Activated CD8-positive, alpha-beta memory T cell treated with anti-CD3 and anti-CD28 coated beads, Interleukin-2, amount 10 ng/mL, durations not matched to agents 7 days and 5 days (primary cell): ENCODE measurements at regions of chr5 and their contacts with region 1.

Region 1: DNA sequence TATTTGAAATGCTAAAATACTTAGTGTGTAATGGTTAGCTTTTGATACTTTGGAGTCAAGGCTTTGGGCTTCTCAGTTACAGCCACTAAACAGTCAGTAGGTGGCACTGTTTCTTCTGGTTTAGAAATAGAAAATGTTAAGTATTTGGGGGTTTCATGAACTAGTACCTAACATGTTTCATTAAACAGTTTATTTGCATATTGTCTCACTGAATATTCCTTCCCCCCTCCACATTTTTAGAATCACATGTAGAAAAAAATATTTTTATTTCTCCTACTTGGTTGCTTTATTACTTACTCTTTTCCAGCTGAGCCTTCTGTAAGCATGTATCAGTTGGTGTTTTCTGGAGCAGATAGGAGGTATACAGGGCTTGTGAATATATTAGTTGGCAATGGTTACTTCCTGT is 48.0 kb downstream of the IPO11 start:
- DNase-seq: no peak
- ATAC-seq: peak; percentile 55
- H3K4me3 Mint-ChIP-seq: no peak overlapping the region
- H3K27ac Mint-ChIP-seq: no peak overlapping the region
- H3K4me1 Mint-ChIP-seq: no peaks in the 10 kb centered on the region
- H3K27me3 Mint-ChIP-seq: no peaks in the 10 kb centered on the region

Region 2: GRCh38 chr5:62450259-62450658 is 10.3 kb before region 1 on chr5:
- CTCF ChIA-PET with region 1: interaction called, 12 read pairs
- DNase-seq: no peak
- ATAC-seq: peak; percentile 36
- H3K4me3 Mint-ChIP-seq: no peak overlapping the region
- H3K27ac Mint-ChIP-seq: no peak overlapping the region
- H3K4me1 Mint-ChIP-seq: peaks cover 4% of the 10 kb centered on the region
- H3K27me3 Mint-ChIP-seq: no peaks in the 10 kb centered on the region

Region 3: GRCh38 chr5:62489471-62489870 is 28.9 kb after region 1 on chr5:
- CTCF ChIA-PET with region 1: no interaction called
- DNase-seq: no peak
- ATAC-seq: no peak
- H3K4me3 Mint-ChIP-seq: no peak overlapping the region
- H3K27ac Mint-ChIP-seq: no peak overlapping the region
- H3K4me1 Mint-ChIP-seq: peaks cover 3% of the 10 kb centered on the region
- H3K27me3 Mint-ChIP-seq: no peaks in the 10 kb centered on the region

Region 4: DNA sequence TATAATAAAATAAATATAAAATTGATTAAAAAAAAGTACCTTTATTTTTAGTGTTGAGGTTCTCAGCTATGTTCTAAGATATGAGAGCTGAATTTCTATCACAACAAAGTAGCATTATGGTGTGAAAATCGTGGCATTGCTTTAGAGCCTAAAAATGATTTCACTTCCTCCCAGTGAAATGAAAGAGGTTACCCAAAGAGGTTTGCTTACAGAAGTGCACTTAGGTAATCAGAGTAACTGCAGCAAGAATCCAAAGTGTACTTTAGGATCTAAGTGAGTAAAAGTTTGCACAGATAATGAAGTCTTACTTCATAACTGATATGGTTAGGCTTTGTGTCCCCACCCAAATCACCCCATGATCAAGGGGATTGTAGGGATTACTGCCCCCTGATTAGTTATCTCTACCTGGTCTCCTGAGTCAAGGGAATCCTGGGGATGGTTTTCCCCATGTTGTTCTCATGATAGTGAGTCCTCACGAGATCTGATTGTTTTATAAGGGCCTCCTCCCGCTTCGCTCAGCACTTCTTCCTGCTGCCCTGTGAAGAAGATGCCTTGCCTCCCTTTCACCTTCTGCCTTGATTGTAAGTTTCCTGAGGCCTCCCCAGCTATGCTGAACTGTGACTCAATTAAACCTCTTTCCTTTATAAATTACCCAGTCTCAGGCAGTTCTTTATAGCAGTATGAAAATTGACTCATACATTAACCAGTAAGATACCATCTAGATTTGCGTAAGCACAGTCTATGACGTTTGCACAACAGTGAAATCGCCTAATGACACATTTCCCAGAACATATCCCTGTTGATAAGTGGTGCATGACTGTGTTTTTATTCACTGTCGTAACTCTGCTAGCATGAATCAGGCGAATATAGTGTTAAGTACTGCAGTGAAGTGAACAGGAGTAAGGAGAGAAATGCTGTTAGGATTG is 77.7 kb after region 1 on chr5:
- CTCF ChIA-PET with region 1: no interaction called
- DNase-seq: no peak
- ATAC-seq: peak; percentile 23
- H3K4me3 Mint-ChIP-seq: no peak overlapping the region
- H3K27ac Mint-ChIP-seq: no peak overlapping the region
- H3K4me1 Mint-ChIP-seq: peaks cover 9% of the 10 kb centered on the region
- H3K27me3 Mint-ChIP-seq: no peaks in the 10 kb centered on the region

Region 5: DNA sequence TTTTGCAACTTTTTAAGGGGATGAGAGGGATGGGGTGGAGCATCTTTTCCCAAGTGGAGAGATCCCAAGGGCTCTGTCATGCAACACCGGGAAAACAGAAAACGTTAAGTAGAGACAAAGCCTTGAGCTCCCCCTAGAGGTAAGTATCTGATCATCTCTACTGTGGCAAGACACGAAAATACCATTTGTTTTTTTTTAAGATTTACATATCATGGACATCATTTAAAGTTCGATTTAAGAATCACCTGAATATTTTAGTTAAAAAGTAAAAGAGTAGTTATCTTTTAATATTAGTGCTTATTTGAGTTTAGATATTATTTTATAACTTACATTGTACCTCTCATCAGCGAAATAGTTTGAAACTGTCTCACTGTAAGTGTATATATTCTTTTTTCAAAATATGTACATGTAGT is 318.4 kb after region 1 on chr5:
- CTCF ChIA-PET with region 1: interaction called, 18 read pairs
- DNase-seq: no peak
- ATAC-seq: peak; percentile 65
- H3K4me3 Mint-ChIP-seq: no peak overlapping the region
- H3K27ac Mint-ChIP-seq: no peak overlapping the region
- H3K4me1 Mint-ChIP-seq: peaks cover 7% of the 10 kb centered on the region
- H3K27me3 Mint-ChIP-seq: peaks cover 3% of the 10 kb centered on the region